Activated CD4-positive, alpha-beta memory T cell treated with anti-CD3 and anti-CD28 coated beads, Interleukin-2, amount 10 ng/mL, durations not matched to agents 7 days and 5 days (primary cell): ENCODE measurements at regions of chr11 and their contacts with region 1.

Region 1: DNA sequence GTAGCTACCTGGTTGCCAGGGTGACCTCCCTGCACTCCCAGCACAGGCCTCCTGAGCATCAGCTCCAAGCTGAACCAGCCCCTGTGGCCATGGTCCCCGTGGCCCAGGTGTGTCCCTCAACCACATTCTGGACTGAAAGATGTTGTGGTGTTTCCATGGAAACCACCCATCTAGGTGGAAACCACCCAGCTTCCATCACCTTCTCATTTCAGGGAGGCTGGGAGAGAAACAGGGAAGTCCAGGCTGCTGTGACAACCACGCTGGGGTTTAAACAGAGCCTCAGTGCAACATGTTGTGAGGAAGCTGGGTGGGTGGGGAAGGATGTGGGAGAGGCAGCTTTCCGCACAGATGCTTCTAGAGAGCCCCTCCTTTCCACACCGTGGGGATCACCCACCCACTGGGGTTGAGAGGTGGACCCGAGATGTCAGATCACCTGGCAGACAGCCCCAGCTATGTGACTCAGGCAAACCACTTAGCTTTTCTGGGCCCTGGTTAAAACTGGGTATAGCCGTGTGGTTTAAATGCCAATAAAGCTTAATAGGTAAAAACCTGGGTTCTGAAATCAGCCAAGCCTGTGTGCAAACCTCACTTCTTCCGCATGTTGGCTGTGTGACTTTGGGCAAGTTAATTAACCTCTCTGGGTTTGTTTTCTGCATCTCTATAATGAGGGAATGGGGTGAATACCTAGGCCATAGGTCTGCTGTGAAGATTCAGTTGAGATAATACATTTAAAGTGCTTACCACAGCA is 46.4 kb downstream of the CD82 start:
- DNase-seq: peak; percentile 77
- H3K4me3 Mint-ChIP-seq: no peak overlapping the region
- H3K27ac Mint-ChIP-seq: peak overlapping the region; percentile 75
- H3K4me1 Mint-ChIP-seq: peaks cover 78% of the 10 kb centered on the region
- H3K27me3 Mint-ChIP-seq: no peaks in the 10 kb centered on the region

Region 2: GRCh38 chr11:44556735-44557409 is 55.0 kb before region 1 on chr11:
- CTCF ChIA-PET with region 1: interaction called, 425 read pairs
- POLR2A ChIA-PET with region 1: interaction called, 28 read pairs
- DNase-seq: peak; percentile 74
- H3K4me3 Mint-ChIP-seq: no peak overlapping the region
- H3K27ac Mint-ChIP-seq: peak overlapping the region; percentile 31
- H3K4me1 Mint-ChIP-seq: peaks cover 34% of the 10 kb centered on the region
- H3K27me3 Mint-ChIP-seq: peaks cover 4% of the 10 kb centered on the region

Region 3: GRCh38 chr11:44565211-44565952 is 46.5 kb before region 1 on chr11 and contains the start of gene CD82:
- CTCF ChIA-PET with region 1: interaction called, 425 read pairs
- POLR2A ChIA-PET with region 1: interaction called, 56 read pairs
- DNase-seq: peak; percentile 100
- H3K4me3 Mint-ChIP-seq: peak within 1 kb of the TSS; percentile 78
- H3K27ac Mint-ChIP-seq: peak within 1 kb of the TSS; percentile 90
- H3K4me1 Mint-ChIP-seq: peaks cover 57% of the 10 kb centered on the region
- H3K27me3 Mint-ChIP-seq: no peaks in the 10 kb centered on the region
- total RNA-seq, gene CD82: 193 to 208 TPM

Region 4: DNA sequence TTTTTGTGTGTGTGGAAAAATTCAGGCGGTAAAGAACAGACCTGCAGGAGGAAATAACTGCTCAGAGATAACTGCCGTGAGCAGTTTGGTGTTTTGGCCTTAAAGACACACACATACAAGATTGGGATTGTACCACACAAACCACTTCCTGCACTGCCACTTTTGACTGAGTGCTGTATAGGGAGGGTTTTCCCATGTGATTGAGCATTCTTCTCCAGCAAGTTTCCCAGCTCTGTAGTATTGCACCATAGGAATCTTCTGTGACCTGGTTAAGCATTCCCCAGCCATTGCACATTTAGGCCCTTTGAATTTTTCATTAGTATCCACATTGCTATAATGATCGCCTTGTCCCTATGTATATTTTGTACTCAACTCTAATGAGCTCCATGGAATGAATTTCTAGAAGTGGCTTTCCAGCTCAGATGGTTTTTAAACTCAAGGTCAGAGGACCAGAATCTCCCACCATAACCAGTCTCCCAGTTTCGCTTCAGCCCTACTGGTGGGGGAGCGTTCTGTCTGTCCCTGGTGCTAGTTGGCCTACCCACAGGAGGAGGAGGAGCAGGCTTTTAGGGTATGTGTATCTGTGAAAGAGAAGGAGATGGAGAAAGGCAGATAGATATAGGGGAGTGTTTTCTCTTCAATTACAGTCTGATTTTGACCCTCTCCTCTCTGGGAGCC is 37.1 kb before region 1 on chr11:
- CTCF ChIA-PET with region 1: interaction called, 21 read pairs
- POLR2A ChIA-PET with region 1: interaction called, 56 read pairs
- DNase-seq: peak; percentile 71
- H3K4me3 Mint-ChIP-seq: peak overlapping the region; percentile 59
- H3K27ac Mint-ChIP-seq: peak overlapping the region; percentile 93
- H3K4me1 Mint-ChIP-seq: peaks cover 91% of the 10 kb centered on the region
- H3K27me3 Mint-ChIP-seq: no peaks in the 10 kb centered on the region

Region 5: GRCh38 chr11:44596525-44597276 is 15.2 kb before region 1 on chr11:
- CTCF ChIA-PET with region 1: interaction called, 18 read pairs
- POLR2A ChIA-PET with region 1: interaction called, 63 read pairs
- DNase-seq: peak; percentile 84
- H3K4me3 Mint-ChIP-seq: peak overlapping the region; percentile 62
- H3K27ac Mint-ChIP-seq: peak overlapping the region; percentile 94
- H3K4me1 Mint-ChIP-seq: peaks cover 77% of the 10 kb centered on the region
- H3K27me3 Mint-ChIP-seq: no peaks in the 10 kb centered on the region